K562 (cell line): ENCODE measurements at regions of chr11 and their contacts with region 1.

Region 1: DNA sequence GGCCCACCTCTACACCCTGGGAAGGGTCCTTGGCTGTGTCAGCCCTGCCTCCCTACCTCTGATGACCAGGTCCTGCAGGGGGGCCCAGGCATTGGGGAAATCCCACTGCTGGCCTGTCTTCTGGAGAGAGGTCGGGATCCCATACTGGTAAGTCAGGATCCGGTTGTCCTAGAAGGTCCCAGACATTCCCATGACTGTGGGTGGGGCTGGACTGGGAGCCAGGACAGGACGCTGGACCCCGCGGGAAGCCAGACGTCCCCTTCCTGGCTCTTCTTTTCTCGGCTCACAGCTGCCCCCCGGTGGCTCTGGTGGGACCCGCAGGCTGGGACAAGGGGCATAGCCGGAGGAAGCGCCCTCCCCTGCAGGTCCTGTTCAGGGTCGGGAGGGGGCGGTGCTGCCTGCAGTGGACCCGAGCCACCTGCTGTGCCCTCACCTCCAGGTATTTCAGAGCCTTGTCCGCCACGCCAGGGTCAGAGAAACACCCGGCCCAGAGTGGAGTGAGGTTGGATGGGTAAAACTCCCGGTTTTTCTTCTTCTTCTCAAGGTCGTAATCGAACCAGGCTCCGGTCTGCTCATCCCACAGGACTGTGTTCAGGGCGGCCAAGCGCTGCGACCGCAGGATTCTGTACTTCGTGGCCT is 20.0 kb downstream of the TREH start:
- DNase-seq: peak; percentile 91 to 98 (median 96)
- ATAC-seq: peak; percentile 98
- H3K4me3 ChIP-seq: no peak overlapping the region
- H3K27ac ChIP-seq: no peak overlapping the region
- H3K4me1 ChIP-seq: peaks cover 0 to 32% of the 10 kb centered on the region in 2 experiments; a peak in 2 of 5 replicates
- H3K27me3 ChIP-seq: no peaks in the 10 kb centered on the region
- CTCF ChIP-seq: peak; percentile 99
- EP300 ChIP-seq: no peak
- POLR2A ChIP-seq: no peak
- RAD21 ChIP-seq: peak; percentile 86 to 94

Region 2: GRCh38 chr11:118592616-118593367 is 66.6 kb before region 1 on chr11:
- CTCF ChIA-PET with region 1: interaction called, 40 read pairs
- POLR2A ChIA-PET with region 1: no interaction called
- in situ Hi-C with region 1: no loop called
- intact Hi-C with region 1: loop called (anchors 1 kb)
- DNase-seq: no peak
- ATAC-seq: no peak
- H3K4me3 ChIP-seq: no peak overlapping the region
- H3K27ac ChIP-seq: no peak overlapping the region
- H3K4me1 ChIP-seq: no peaks in the 10 kb centered on the region; a peak in 1 of 5 replicates
- H3K27me3 ChIP-seq: no peaks in the 10 kb centered on the region
- CTCF ChIP-seq: no peak
- EP300 ChIP-seq: no peak
- POLR2A ChIP-seq: no peak
- RAD21 ChIP-seq: no peak

Region 3: DNA sequence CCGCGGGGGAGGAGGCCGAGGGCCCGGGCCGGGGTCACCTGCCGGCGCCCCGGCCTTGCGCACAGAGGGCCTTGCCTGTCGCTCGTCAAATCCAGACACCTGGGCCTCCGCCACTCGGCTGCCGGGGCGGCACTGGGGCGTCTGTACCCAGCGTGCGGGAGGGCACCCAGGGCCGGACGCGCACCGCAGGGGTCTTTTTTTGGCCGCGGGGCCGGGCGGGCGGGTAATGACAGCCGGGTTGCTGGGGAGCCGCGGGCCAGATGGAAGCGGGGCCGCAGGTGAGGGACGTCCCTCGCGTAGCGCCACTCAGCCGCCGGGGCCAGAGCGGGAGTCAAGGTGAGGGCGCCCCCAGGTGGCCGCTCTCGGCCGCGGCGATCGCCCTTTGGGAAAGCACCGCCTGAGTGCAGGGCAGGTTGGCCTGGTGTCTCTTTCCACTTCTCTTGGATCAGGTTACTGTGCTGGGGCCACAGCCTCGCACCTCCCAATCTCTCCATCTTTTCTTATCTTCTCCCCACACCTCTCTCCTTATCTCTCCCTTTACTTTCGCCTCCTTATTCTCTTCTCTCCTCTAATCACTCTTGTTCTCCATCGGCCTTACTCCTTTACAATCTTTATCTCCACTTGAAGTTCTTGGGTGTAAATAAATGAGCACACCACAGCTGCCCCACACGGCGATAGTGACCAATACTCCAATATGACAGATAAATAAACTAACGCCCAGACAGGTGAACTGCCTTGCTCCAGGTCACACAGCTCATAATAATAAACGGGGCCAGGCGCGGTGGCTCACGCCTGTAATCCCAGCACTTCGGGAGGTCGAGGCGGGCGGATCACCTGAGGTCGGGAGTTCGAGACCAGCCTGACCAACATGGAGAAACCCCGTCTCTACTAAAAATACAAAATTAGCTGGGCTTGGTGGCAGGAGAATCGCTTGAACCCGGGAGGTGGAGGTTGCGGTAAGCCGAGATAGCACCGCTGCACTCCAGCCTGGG is 48.3 kb before region 1 on chr11:
- CTCF ChIA-PET with region 1: no interaction called
- POLR2A ChIA-PET with region 1: interaction called, 5 read pairs
- in situ Hi-C with region 1: no loop called
- intact Hi-C with region 1: loop called (anchors 2 kb)
- DNase-seq: peak; percentile 72 to 91 (median 76)
- ATAC-seq: peak; percentile 81
- H3K4me3 ChIP-seq: no peak overlapping the region
- H3K27ac ChIP-seq: peak overlapping the region; percentile 38; the same call in 1 of the 3 replicates
- H3K4me1 ChIP-seq: peaks cover 21 to 51% of the 10 kb centered on the region in 2 experiments
- H3K27me3 ChIP-seq: no peaks in the 10 kb centered on the region
- CTCF ChIP-seq: peak; percentile 88 to 97 (median 92)
- EP300 ChIP-seq: peak; percentile 52
- POLR2A ChIP-seq: no peak
- RAD21 ChIP-seq: peak; percentile 66 to 90

Region 4: DNA sequence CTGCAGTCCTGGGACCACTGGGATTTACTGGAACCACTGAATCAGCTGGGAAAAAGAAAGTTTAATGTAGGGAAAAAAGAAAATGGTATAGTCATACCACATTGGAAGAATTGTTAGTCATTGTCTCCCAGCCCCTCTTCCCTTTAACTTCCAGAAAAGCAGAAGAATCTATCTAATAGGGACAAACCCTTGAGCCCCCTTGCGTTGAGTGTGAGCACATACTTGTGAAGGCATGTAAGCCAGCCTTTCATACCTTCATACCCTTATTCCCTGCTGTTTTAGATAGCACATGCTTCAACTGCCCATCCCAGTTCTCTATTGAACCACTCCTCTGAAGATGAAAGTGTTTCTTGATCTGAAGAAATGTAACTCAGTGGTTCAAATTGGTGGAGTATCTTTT is 13.4 kb after region 1 on chr11:
- CTCF ChIA-PET with region 1: interaction called, 3 read pairs
- POLR2A ChIA-PET with region 1: no interaction called
- in situ Hi-C with region 1: no loop called
- intact Hi-C with region 1: loop called (anchors 2 kb)
- DNase-seq: peak in 3 of 4 experiments; percentile 21 to 56 (median 34)
- ATAC-seq: peak; percentile 92
- H3K4me3 ChIP-seq: no peak overlapping the region
- H3K27ac ChIP-seq: no peak overlapping the region
- H3K4me1 ChIP-seq: no peaks in the 10 kb centered on the region
- H3K27me3 ChIP-seq: peaks cover 0 to 4% of the 10 kb centered on the region in 2 experiments; a peak in 1 of 5 replicates
- CTCF ChIP-seq: peak; percentile 45 to 48 (median 47); a peak in 4 of 6 replicates
- EP300 ChIP-seq: no peak
- POLR2A ChIP-seq: no peak
- RAD21 ChIP-seq: peak in 1 of 2 experiments; percentile 43; a peak in 2 of 4 replicates

Region 5: DNA sequence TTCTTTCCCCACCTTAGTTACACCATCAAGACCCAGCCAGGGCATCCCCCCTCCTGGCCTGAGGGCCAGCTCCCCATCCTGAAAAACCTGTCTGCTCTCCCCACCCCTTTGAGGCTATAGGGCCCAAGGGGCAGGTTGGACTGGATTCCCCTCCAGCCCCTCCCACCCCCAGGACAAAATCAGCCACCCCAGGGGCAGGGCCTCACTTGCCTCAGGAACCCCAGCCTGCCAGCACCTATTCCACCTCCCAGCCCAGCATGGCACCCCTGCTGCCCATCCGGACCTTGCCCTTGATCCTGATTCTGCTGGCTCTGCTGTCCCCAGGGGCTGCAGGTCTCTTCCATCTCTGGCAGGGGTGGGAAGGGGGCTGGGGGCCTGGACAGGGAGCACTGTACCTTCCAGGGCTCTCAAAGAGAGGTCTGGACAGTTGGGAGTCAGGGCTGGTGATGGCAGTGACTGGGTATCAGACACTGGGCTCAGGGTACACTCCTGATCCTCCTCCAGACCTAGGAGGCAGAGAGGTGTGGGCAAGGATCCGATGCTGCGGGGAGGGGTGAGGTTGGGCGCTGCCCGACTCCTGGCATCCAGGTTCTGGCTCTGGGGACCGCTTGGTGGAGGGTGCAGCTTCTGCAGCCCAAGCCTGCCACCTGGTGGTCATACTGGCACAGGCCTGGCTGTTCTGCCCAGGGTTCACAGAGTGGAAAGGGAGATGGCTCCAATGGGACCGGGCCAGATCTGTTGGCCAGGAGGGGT is 296.8 kb after region 1 on chr11 and contains the start of gene UPK2:
- CTCF ChIA-PET with region 1: interaction called, 14 read pairs
- POLR2A ChIA-PET with region 1: no interaction called
- in situ Hi-C with region 1: no loop called
- intact Hi-C with region 1: loop called (anchors 10 kb)
- DNase-seq: peak; percentile 84 to 91 (median 90)
- ATAC-seq: peak; percentile 98
- H3K4me3 ChIP-seq: no peak within 1 kb of the TSS
- H3K27ac ChIP-seq: no peak within 1 kb of the TSS
- H3K4me1 ChIP-seq: peaks cover 0 to 17% of the 10 kb centered on the region in 2 experiments; a peak in 3 of 5 replicates
- H3K27me3 ChIP-seq: peaks cover 12 to 33% of the 10 kb centered on the region in 2 experiments; a peak in 4 of 5 replicates
- CTCF ChIP-seq: peak; percentile 92 to 97 (median 95)
- EP300 ChIP-seq: no peak
- POLR2A ChIP-seq: no peak
- RAD21 ChIP-seq: peak; percentile 89 to 96
- polyA plus RNA-seq, gene UPK2: not detected